SK-N-SH (cell line): ENCODE measurements at regions of chr17 and their contacts with region 1.

Region 1: DNA sequence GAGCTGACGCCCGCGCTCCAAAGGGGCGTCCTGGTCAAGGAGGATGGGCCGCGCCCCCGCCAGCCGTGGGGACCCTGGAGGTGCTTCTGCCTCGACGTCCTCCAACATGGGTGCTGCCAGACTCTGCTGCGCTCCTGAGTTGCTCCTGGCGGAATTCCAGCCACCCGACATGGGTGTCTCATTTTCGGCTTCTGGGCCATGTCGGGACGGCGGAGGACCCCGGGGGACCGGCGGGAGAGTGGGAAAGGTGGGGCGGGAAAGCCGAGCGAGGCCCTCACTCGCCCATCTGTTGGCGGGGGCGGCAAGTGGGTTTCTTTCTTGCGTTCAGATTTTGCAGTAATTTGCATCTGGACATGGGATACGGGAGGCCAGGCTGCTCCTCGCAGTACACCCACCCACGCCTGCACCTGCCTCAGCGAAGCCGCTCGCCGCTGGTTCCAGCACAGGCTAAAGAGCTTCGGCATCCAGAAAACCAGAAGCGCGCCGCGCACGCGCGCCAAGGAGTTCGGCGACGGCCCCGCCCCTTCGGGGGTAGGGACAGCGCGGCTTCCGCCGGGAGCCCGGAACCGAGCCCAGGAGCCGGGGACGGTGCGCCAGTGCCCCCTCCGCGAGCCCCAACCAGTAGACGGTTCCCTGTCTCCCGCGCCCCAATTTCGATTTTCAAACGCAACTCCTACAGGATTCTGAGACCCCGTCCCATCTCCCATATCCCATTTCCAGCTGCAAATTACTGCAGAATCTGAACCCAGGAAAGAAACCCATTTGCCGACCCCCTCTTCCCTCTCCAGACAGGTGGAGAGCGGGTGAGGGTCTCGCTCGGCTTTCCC is at the start of gene ARMC7:
- DNase-seq: peak; percentile 100
- H3K4me3 ChIP-seq: peak within 1 kb of the TSS; percentile 67 to 75
- H3K27ac ChIP-seq: peak within 1 kb of the TSS in 1 of 2 experiments; percentile 60; a peak in 2 of 4 replicates
- H3K4me1 ChIP-seq: peaks cover 0 to 25% of the 10 kb centered on the region in 2 experiments; a peak in 1 of 4 replicates
- H3K27me3 ChIP-seq: no peaks in the 10 kb centered on the region
- CTCF ChIP-seq: no peak
- EP300 ChIP-seq: no peak
- RAD21 ChIP-seq: no peak
- polyA plus RNA-seq, gene ARMC7: 7.3 and 10.8 TPM in 2 replicates

Region 2: DNA sequence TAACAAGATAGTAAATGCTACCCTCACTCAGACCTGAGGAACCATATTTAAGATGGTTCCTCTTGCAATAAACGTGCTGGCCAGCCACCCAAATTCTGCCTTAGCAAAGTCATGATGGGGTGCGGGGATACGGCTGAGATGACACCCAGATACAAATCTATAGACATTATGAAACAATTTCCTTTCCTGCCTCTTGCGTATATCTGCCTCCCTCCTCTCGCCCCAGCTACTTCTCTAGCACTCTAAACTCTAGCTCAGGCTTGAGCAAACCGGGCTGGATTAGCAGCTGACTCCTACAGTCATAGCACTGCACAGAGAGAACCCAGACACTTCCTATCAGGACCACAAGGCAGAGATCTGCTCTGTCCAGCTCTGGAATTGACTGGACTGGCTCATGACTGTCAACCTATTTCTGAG is 419.2 kb before region 1 on chr17:
- CTCF ChIA-PET with region 1: no interaction called
- POLR2A ChIA-PET with region 1: no interaction called
- DNase-seq: no peak
- H3K4me3 ChIP-seq: no peak overlapping the region
- H3K27ac ChIP-seq: no peak overlapping the region
- H3K4me1 ChIP-seq: no peaks in the 10 kb centered on the region
- H3K27me3 ChIP-seq: no peaks in the 10 kb centered on the region
- CTCF ChIP-seq: no peak
- EP300 ChIP-seq: no peak
- RAD21 ChIP-seq: no peak

Region 3: GRCh38 chr17:74883041-74883745 is 226.4 kb before region 1 on chr17:
- CTCF ChIA-PET with region 1: no interaction called
- POLR2A ChIA-PET with region 1: no interaction called
- DNase-seq: no peak
- H3K4me3 ChIP-seq: no peak overlapping the region
- H3K27ac ChIP-seq: no peak overlapping the region
- H3K4me1 ChIP-seq: no peaks in the 10 kb centered on the region
- H3K27me3 ChIP-seq: peaks cover 28% of the 10 kb centered on the region; the same call in 1 of the 2 replicates
- CTCF ChIP-seq: no peak
- EP300 ChIP-seq: no peak
- RAD21 ChIP-seq: no peak

Region 4: GRCh38 chr17:74923533-74924249 is 185.9 kb before region 1 on chr17:
- CTCF ChIA-PET with region 1: interaction called, 11 read pairs
- POLR2A ChIA-PET with region 1: interaction called, 3 read pairs
- DNase-seq: peak; percentile 98
- H3K4me3 ChIP-seq: peak overlapping the region; percentile 42 to 62
- H3K27ac ChIP-seq: no peak overlapping the region
- H3K4me1 ChIP-seq: peaks cover 0 to 19% of the 10 kb centered on the region in 2 experiments; a peak in 1 of 4 replicates
- H3K27me3 ChIP-seq: peaks cover 71% of the 10 kb centered on the region
- CTCF ChIP-seq: peak; percentile 86
- EP300 ChIP-seq: no peak
- RAD21 ChIP-seq: peak; percentile 77

Region 5: GRCh38 chr17:75046582-75047289 is 62.9 kb before region 1 on chr17 and contains the starts of genes ATP5PD and KCTD2:
- CTCF ChIA-PET with region 1: interaction called, 19 read pairs
- POLR2A ChIA-PET with region 1: no interaction called
- DNase-seq: peak; percentile 100
- H3K4me3 ChIP-seq: peak within 1 kb of the TSS; percentile 92 to 97
- H3K27ac ChIP-seq: peak within 1 kb of the TSS; percentile 90 to 92
- H3K4me1 ChIP-seq: peaks cover 7 to 15% of the 10 kb centered on the region in 2 experiments; a peak in 2 of 4 replicates
- H3K27me3 ChIP-seq: no peaks in the 10 kb centered on the region
- CTCF ChIP-seq: no peak
- EP300 ChIP-seq: no peak; a peak in 1 of 4 replicates
- RAD21 ChIP-seq: no peak
- polyA plus RNA-seq, gene ATP5PD: 354 and 454 TPM in 2 replicates
- polyA plus RNA-seq, gene KCTD2: 27.5 and 34.2 TPM in 2 replicates

Region 6: GRCh38 chr17:75087558-75088453 is 21.8 kb before region 1 on chr17 and contains the start of gene SLC16A5:
- CTCF ChIA-PET with region 1: interaction called, 23 read pairs
- POLR2A ChIA-PET with region 1: no interaction called
- DNase-seq: no peak
- H3K4me3 ChIP-seq: no peak within 1 kb of the TSS
- H3K27ac ChIP-seq: no peak within 1 kb of the TSS
- H3K4me1 ChIP-seq: peaks cover 0 to 10% of the 10 kb centered on the region in 2 experiments; a peak in 1 of 4 replicates
- H3K27me3 ChIP-seq: no peaks in the 10 kb centered on the region
- CTCF ChIP-seq: no peak
- EP300 ChIP-seq: no peak
- RAD21 ChIP-seq: no peak
- polyA plus RNA-seq, gene SLC16A5: 0.03 and 0.06 TPM in 2 replicates

Region 7: DNA sequence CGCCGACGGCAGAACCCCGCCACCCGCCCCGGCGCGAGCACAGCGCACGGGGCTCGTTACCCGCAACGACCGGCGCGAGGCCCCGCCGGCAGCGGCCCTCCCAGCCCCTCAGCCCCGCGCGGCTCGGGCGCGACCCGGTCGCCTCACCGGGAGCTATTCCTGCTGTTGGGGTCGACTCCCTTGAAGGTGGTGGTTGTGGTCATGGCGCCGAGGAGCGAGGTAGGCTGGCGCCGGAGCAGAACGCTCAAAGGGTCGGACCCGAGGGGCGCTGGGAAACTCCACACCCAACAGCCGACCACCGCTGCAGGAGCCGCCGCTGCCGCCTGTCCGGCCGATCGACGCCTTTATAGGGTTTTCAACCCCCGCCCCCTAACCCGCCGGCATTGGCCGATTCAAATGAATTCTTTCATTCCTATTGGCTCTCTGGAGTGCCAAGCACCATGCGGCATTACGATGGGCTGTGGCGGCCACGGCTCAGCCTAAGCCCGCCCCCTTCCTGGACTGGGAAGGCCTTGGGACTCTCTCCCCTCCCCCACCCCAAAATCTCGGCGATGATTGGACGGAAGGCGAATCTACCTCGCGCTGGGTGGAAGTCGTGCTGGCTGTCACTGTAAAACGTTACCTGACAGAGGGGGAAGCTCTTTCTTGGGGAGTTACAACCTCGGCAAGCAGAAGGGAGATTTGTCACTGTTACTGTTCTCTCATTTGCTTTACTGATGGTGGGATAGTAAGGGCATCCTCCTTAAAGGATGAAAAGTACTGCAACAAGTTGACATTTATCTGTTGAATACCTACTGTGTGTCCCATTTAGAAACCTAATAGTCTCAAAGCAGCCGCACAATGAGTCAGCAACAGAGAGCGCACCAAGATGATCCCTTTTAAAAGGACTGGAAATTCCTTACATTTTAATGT is 44.8 kb after region 1 on chr17 and contains the start of gene JPT1:
- CTCF ChIA-PET with region 1: interaction called, 14 read pairs
- POLR2A ChIA-PET with region 1: interaction called, 6 read pairs
- DNase-seq: peak; percentile 99
- H3K4me3 ChIP-seq: peak within 1 kb of the TSS; percentile 73 to 77
- H3K27ac ChIP-seq: peak within 1 kb of the TSS; percentile 53 to 85
- H3K4me1 ChIP-seq: peaks cover 5 to 8% of the 10 kb centered on the region in 2 experiments; a peak in 3 of 4 replicates
- H3K27me3 ChIP-seq: no peaks in the 10 kb centered on the region
- CTCF ChIP-seq: no peak
- EP300 ChIP-seq: no peak
- RAD21 ChIP-seq: no peak
- polyA plus RNA-seq, gene JPT1: 259 and 490 TPM in 2 replicates

Region 8: DNA sequence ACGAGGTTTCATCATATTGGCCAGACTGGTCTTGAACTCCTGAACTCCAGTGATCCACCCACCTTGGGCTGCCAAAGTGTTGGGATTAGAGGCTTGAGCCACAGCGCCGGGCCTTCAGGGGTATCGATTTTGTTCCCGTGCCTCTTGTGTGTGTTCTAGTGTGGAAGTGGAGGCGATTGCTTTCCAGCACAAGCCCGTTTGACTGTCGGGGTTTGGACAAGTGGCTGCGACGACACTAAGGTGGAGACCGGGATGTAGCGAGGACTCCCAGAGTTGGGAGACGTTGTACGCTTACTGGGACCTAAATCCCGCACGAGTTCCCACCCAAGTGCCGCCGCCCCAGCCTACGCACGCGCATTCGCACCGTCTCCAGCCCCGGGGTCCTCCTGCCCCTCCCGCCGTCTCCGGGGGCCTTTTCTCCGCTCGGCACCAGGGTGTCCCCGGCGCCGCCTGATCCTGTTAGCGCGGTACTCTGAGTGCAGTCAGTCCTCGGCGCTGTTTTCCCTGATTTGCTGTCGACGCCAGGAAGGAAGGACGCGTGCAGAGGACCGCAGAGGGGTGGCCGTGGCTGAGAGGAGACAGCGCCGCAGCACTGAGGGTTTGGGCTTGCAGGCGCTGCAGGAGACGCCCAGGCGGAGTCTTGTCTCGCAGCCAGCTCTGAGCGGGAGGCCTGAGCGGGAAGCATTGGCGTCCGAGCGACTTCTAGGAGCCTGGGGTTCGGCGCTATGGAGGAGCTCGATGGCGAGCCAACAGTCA is 95.6 kb after region 1 on chr17 and contains the start of gene NUP85:
- CTCF ChIA-PET with region 1: interaction called, 231 read pairs
- POLR2A ChIA-PET with region 1: interaction called, 9 read pairs
- DNase-seq: peak; percentile 100
- H3K4me3 ChIP-seq: peak within 1 kb of the TSS; percentile 70 to 87
- H3K27ac ChIP-seq: peak within 1 kb of the TSS; percentile 97 to 98
- H3K4me1 ChIP-seq: peaks cover 4 to 6% of the 10 kb centered on the region in 2 experiments; a peak in 1 of 4 replicates
- H3K27me3 ChIP-seq: no peaks in the 10 kb centered on the region
- CTCF ChIP-seq: no peak
- EP300 ChIP-seq: no peak
- RAD21 ChIP-seq: no peak
- polyA plus RNA-seq, gene NUP85: 80.5 and 99.8 TPM in 2 replicates

Region 9: DNA sequence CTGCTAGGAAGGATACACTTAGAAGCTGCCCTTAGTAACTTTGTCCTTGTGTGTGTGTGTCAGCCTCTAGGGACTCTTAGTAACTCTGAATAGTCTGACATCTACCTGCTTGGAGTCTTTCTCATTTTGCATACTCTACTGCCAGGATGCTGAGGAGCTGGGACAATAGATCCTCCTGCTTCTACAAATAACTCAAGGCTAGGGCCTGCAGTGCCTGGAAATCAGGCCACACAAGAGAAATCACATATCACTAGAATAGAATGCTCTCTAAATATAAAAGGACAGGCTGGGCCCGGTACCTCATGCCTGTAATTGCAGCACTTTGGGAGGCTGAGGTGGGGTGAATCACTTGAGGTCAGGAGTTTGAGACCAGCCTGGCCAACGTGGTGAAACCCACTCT is 218.1 kb after region 1 on chr17:
- CTCF ChIA-PET with region 1: no interaction called
- POLR2A ChIA-PET with region 1: no interaction called
- DNase-seq: no peak
- H3K4me3 ChIP-seq: no peak overlapping the region
- H3K27ac ChIP-seq: no peak overlapping the region
- H3K4me1 ChIP-seq: peaks cover 3 to 16% of the 10 kb centered on the region in 2 experiments; a peak in 3 of 4 replicates
- H3K27me3 ChIP-seq: no peaks in the 10 kb centered on the region
- CTCF ChIP-seq: no peak
- EP300 ChIP-seq: no peak
- RAD21 ChIP-seq: no peak

Region 10: DNA sequence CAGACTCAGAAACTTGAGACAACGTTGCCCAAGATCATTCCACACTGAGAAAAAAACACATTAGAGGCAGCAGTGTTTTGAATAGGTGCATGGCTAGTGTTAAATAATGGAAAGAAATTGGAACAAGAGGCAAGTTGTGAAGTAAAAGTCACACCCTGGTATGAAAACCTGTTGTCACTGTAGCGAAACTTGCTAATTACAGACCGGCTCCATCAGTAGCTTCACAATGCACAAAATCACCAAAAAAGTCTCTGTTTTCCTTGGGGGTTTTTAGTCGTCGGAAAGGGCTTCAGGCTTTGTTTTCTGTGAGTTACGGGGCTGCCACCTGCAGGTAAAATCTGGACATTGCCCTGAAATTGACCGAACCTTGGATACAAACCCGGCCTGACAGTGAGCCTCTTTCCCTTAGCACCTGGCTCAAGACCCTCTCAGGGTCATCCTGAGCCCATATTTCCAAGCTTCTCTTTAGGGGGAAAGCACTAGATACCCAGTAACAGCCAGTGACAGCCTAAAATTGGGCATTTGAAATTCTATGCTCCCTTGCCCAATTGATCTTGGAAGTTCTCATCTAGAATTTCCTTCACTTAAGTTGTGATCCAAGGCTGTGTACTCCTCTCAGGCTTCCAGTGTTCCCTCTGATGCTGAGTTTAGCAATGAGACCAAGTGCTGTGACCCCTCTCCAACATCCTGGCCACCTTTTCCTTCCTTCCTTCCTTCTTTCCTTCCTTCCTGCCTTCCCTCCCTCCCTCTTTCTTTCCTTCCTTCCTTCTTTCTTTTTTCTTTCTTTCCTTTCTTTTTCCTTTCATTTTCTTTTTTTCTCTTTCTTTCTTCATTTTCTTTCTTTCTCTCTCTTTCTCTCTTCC is 303.1 kb after region 1 on chr17:
- CTCF ChIA-PET with region 1: interaction called, 29 read pairs
- POLR2A ChIA-PET with region 1: no interaction called
- DNase-seq: peak; percentile 81
- H3K4me3 ChIP-seq: peak overlapping the region; percentile 3 to 35; a peak in 3 of 4 replicates
- H3K27ac ChIP-seq: no peak overlapping the region
- H3K4me1 ChIP-seq: no peaks in the 10 kb centered on the region
- H3K27me3 ChIP-seq: peaks cover 22% of the 10 kb centered on the region
- CTCF ChIP-seq: peak; percentile 92
- EP300 ChIP-seq: no peak
- RAD21 ChIP-seq: peak; percentile 96